ENCODE measurements at regions of chr10 and their contacts with region 1.

Region 1: GRCh38 chr10:29946953-29947700 is 112.3 kb downstream of the JCAD start:
- DNase-seq: peak; percentile 84 to 93
- ATAC-seq: peak; percentile 84 to 87
- H3K4me3 ChIP-seq: peak overlapping the region; percentile 14 to 39 (median 24)
- H3K27ac ChIP-seq: peak overlapping the region; percentile 91 to 99 (median 96)
- H3K4me1 ChIP-seq: peaks cover 32 to 36% of the 10 kb centered on the region in 2 donors
- H3K27me3 ChIP-seq: no peaks in the 10 kb centered on the region
- CTCF ChIP-seq: no peak
- POLR2A ChIP-seq: peak; percentile 25 to 60

Region 2: DNA sequence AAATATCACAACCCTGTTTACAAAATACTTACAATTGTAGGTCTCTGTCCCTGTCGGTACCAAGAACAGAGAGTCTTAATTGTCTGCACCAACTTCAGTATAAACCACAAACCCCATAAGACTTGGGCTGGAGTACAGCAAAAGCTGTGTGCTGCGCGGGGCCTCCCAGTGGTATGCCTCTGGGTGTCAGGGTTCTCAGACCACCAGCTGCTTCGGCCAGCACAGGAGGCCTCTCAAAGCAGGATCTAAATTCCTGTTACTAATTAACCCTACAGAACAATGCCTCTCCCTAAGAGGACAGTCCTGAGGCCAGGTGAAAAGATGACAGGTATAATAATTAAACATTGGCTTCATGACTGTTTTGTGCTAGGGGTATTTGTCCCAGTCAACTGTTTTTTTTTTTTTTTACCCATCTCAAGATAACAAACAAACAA is 311.4 kb before region 1 on chr10:
- in situ Hi-C with region 1: loop called in 2 of 4 experiments (anchors 25 kb)
- intact Hi-C with region 1: loop called (anchors 5 kb)
- DNase-seq: no peak
- ATAC-seq: peak; percentile 16 to 18
- H3K4me3 ChIP-seq: peak overlapping the region; percentile 2 to 73 (median 54)
- H3K27ac ChIP-seq: peak overlapping the region; percentile 95 to 96 (median 96)
- H3K4me1 ChIP-seq: peaks cover 11 to 21% of the 10 kb centered on the region in 2 donors
- H3K27me3 ChIP-seq: no peaks in the 10 kb centered on the region
- CTCF ChIP-seq: no peak
- POLR2A ChIP-seq: peak in 1 of 2 donors; percentile 7

Region 3: DNA sequence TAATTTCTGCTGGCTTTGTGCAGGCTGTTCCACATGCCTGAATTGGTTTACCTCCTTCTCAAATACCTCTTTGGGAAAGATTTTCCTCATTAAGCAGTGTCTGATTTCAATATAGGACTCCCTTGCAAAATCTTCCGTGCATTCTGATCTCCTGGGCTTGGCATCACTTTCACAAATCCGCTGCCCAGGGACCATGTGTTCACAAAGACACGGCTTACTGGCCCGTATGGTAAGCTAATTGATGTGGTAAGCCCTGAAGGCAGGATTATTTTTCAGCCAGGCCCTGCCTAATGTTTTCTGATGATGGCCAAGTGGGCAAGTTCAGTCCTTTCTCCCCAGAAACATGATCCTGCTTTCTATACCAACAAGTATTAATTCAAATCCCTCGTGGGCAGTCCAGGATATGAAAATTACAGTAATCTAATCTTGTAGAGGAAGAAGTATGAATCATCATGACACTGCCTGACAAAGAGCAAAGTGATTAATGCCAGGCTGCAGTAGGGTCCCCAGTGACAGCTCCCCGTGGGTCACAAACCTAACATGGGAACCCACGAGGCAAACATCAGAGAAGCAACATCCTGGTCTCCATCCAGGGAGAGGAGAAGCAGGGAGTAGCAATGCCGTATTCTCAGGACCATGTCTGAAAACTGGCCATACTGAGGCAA is 300.8 kb before region 1 on chr10:
- in situ Hi-C with region 1: loop called in 2 of 4 experiments (anchors 25 kb)
- intact Hi-C with region 1: loop called (anchors 5 kb)
- DNase-seq: peak; percentile 83 to 88
- ATAC-seq: peak; percentile 45 to 52
- H3K4me3 ChIP-seq: peak overlapping the region in 3 of 4 donors; percentile 21 to 40 (median 22)
- H3K27ac ChIP-seq: peak overlapping the region; percentile 95 to 96 (median 96)
- H3K4me1 ChIP-seq: peaks cover 61 to 69% of the 10 kb centered on the region in 2 donors
- H3K27me3 ChIP-seq: no peaks in the 10 kb centered on the region
- CTCF ChIP-seq: no peak
- POLR2A ChIP-seq: peak in 1 of 2 donors; percentile 47

Region 4: GRCh38 chr10:29857843-29858701 is 89.1 kb before region 1 on chr10:
- in situ Hi-C with region 1: no loop called
- intact Hi-C with region 1: loop called (anchors 1 kb)
- DNase-seq: peak; percentile 77 to 89
- ATAC-seq: peak; percentile 70 to 84
- H3K4me3 ChIP-seq: peak overlapping the region in 2 of 4 donors; percentile 5 to 37
- H3K27ac ChIP-seq: peak overlapping the region; percentile 78 to 85 (median 84)
- H3K4me1 ChIP-seq: peaks cover 47 to 49% of the 10 kb centered on the region in 2 donors
- H3K27me3 ChIP-seq: no peaks in the 10 kb centered on the region
- CTCF ChIP-seq: peak; percentile 75 to 85 (median 77)
- POLR2A ChIP-seq: peak in 1 of 2 donors; percentile 41

Region 5: GRCh38 chr10:29969255-29970011 is 22.3 kb after region 1 on chr10:
- in situ Hi-C with region 1: no loop called
- intact Hi-C with region 1: loop called (anchors 1 kb)
- DNase-seq: peak; percentile 86 to 93
- ATAC-seq: peak; percentile 96
- H3K4me3 ChIP-seq: no peak overlapping the region
- H3K27ac ChIP-seq: peak overlapping the region; percentile 81 to 86 (median 82)
- H3K4me1 ChIP-seq: peaks cover 16 to 17% of the 10 kb centered on the region in 2 donors
- H3K27me3 ChIP-seq: no peaks in the 10 kb centered on the region
- CTCF ChIP-seq: no peak
- POLR2A ChIP-seq: peak; percentile 32 to 67